Naive thymus-derived CD8-positive, alpha-beta T cell (primary cell): ENCODE measurements at regions of chr2 and their contacts with region 1.

Region 1: DNA sequence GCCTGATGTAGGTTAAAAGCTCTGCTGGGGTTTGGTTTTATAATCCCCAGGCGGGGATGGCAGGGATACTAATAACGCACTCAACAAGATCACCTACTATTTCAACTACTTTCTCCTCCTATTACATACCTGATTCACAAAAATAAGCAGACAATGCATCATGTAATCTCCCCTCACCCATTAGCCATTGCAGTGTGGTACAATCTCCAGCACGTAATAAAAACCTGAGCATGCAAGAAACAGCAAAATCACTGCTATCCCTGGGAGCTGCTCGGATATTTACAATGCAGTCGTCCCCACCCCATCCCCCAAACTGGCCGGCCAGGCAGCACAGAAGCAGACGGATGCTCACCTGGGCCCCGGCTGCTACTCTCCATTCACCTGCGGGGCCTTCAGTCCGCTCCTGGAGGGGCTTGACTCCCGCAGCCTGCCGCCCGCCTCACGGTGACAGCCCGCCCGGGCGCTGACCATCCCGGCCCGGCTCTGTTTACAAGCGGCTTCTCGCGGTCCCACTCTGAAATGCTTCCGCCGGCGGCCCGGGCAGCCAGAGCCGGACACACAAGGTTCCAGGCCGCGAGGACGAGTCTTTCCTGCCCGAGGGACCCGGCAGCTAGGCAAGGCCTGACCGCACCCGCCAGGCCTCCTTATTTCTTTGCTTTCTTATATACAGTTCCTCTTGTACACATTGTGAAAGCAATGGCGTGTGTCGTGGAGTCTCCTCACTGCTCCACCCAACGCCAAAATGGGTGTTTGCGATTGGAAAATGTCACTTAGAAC is at the start of gene PLEKHM3:
- DNase-seq: peak; percentile 30 to 78 (median 62)
- ATAC-seq: peak; percentile 77 to 83
- H3K4me3 Mint-ChIP-seq: peak within 1 kb of the TSS; percentile 89 to 98 (median 94)
- H3K27ac Mint-ChIP-seq: peak within 1 kb of the TSS; percentile 91 to 99 (median 95)
- H3K4me1 Mint-ChIP-seq: peaks cover 8 to 42% (median 31%) of the 10 kb centered on the region in 4 donors
- H3K27me3 Mint-ChIP-seq: no peaks in the 10 kb centered on the region
- polyA plus RNA-seq, gene PLEKHM3: 2.5 to 3.4 (median 3.4) TPM

Region 2: DNA sequence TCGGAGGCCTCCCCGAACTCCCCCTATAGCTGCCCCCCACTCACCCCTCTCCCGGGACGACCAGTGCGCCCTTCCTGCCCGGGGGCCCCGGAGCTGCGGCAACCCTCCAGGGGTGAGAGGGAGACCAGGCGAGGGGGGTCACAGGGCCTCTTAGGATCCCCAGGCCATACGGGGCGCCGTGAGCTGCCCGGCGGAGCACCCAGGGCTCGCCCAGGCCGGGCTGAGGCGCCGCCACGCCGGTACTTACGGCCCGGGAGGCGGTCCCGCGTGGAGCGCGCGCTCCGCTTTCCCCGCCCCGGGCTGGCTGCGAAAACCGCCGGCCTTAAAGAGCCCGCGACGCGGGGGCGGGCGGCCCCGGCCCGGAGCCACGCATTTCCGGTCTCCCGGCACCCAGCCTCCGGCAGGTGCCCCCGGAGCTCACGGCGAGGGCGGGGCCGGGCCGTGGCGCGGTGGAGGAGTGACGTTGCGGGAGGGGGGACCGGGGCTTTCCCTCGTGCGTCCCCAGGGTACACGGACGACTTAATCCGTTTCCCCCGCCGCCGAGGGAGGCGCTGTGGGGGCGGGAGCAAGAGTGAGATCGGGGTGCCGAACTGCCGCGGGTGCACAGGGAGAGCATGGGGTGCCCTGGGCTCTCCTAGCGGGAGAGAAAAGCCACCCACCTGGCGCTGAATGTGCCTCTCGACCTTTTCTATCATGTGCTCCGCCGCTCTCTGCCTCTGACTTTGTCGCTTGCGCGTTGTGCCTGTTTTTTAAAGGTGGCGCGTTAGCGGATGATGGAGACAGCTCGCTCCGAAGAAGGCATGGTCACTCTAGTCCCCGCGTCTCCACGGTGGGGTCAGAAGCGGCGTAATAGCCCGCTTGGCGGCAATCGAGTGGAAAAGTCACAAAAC is 400.0 kb before region 1 on chr2 and contains the start of gene METTL21A:
- POLR2A ChIA-PET with region 1: interaction called, 27 read pairs
- DNase-seq: peak; percentile 89 to 96 (median 94)
- ATAC-seq: peak; percentile 73 to 79
- H3K4me3 Mint-ChIP-seq: peak within 1 kb of the TSS; percentile 83 to 96 (median 94)
- H3K27ac Mint-ChIP-seq: peak within 1 kb of the TSS; percentile 23 to 98 (median 97)
- H3K4me1 Mint-ChIP-seq: peaks cover 19 to 50% (median 46%) of the 10 kb centered on the region in 4 donors
- H3K27me3 Mint-ChIP-seq: no peaks in the 10 kb centered on the region
- polyA plus RNA-seq, gene METTL21A: 34.2 to 50.4 (median 39.4) TPM